Mammary epithelial cell (primary cell): ENCODE measurements at regions of chr6 and their contacts with region 1.

Region 1: DNA sequence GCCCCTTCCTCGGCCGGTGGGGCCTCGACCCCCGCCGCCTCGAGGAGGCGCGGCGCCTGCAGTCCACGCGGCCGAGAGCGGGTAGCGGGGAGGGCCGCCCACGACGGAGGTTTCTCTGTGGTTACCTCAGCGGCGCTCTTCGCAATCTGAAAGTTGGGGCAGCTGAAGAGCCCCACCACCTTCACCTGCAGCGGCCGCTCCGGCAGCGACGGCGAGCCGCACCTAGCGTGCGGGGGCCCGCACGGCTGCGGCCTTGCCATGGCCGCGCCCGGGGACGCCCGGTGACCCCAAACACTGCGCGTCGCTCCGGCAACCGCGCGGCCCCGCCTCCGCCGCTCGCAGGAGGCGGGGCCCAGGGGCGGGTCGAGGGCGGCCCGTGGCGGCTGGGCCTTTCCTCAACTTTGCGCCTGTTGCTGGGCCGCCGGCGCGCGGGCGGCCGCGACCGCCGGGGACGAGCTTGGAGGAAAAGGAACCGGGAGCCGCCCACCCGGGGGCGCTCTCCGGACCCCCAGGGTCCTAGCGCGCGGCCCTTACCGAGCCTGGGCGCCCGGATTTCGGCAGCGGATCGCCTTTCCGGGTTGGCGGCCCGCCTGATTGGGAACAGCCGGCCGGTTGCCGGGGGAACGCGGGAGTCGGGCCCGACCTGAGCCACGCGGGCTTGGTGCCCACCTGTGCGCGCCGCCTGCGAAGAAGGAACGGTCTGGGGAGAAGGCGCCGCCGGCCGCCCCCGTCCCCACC is at the starts of genes PPIL6 and SMPD2:
- DNase-seq: peak; percentile 85
- H3K4me3 ChIP-seq: peak within 1 kb of the TSS; percentile 67 to 88 (median 67)
- H3K27ac ChIP-seq: peak within 1 kb of the TSS; percentile 89
- H3K4me1 ChIP-seq: peaks cover 14% of the 10 kb centered on the region
- H3K27me3 ChIP-seq: no peaks in the 10 kb centered on the region
- CTCF ChIP-seq: peak in 1 of 2 donors; percentile 24
- total RNA-seq, gene PPIL6: 0.61 to 4.2 TPM
- total RNA-seq, gene SMPD2: 11.3 to 11.7 TPM

Region 2: DNA sequence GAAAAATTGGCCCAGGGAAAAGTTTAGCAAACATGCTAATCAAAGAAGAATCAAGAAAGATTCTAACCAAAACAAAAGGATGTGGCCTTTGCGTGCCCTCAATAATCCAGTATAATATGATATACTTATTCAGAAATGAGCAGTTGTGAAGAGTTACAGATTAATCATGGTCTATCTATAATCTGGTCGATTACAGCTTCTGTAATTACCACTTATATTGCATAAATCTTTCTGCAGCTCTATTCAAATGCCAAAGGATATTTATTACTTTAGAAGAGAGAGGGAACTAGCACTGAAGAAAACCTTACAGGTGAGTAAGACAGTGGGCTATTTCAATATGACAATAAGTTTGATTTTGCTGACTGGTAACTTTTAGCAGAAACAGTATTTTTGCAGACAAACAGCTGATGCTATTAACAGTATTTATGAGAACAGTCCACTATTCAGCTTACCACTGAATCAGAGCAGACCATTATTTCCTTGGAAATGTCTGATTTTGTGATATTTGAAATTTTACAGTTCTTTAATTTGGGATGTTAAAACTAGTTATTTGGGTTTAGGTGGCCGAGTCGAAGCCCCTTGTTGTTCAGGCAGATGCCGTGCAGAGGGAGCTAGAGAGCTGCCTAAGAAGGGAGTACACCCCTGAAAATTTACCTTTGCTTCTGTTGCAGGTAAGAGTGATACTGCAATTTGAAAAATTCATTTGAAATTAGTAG is 252.9 kb before region 1 on chr6:
- CTCF ChIA-PET with region 1: no interaction called
- dilution Hi-C with region 1: no loop called
- in situ Hi-C with region 1: no loop called
- intact Hi-C with region 1: loop called (anchors 2 kb)
- DNase-seq: peak; percentile 16
- H3K4me3 ChIP-seq: no peak overlapping the region
- H3K27ac ChIP-seq: no peak overlapping the region
- H3K4me1 ChIP-seq: no peaks in the 10 kb centered on the region
- H3K27me3 ChIP-seq: peaks cover 2% of the 10 kb centered on the region
- CTCF ChIP-seq: peak; percentile 88 to 98

Region 3: GRCh38 chr6:109336221-109336961 is 104.1 kb before region 1 on chr6:
- CTCF ChIA-PET with region 1: no interaction called
- dilution Hi-C with region 1: no loop called
- in situ Hi-C with region 1: no loop called
- intact Hi-C with region 1: no loop called
- DNase-seq: peak; percentile 31
- H3K4me3 ChIP-seq: no peak overlapping the region
- H3K27ac ChIP-seq: no peak overlapping the region
- H3K4me1 ChIP-seq: no peaks in the 10 kb centered on the region
- H3K27me3 ChIP-seq: no peaks in the 10 kb centered on the region
- CTCF ChIP-seq: no peak

Region 4: GRCh38 chr6:109362102-109362884 is 78.2 kb before region 1 on chr6:
- CTCF ChIA-PET with region 1: no interaction called
- dilution Hi-C with region 1: loop called (anchors 5 kb)
- in situ Hi-C with region 1: no loop called
- intact Hi-C with region 1: no loop called
- DNase-seq: no peak
- H3K4me3 ChIP-seq: no peak overlapping the region
- H3K27ac ChIP-seq: no peak overlapping the region
- H3K4me1 ChIP-seq: no peaks in the 10 kb centered on the region
- H3K27me3 ChIP-seq: no peaks in the 10 kb centered on the region
- CTCF ChIP-seq: no peak

Region 5: DNA sequence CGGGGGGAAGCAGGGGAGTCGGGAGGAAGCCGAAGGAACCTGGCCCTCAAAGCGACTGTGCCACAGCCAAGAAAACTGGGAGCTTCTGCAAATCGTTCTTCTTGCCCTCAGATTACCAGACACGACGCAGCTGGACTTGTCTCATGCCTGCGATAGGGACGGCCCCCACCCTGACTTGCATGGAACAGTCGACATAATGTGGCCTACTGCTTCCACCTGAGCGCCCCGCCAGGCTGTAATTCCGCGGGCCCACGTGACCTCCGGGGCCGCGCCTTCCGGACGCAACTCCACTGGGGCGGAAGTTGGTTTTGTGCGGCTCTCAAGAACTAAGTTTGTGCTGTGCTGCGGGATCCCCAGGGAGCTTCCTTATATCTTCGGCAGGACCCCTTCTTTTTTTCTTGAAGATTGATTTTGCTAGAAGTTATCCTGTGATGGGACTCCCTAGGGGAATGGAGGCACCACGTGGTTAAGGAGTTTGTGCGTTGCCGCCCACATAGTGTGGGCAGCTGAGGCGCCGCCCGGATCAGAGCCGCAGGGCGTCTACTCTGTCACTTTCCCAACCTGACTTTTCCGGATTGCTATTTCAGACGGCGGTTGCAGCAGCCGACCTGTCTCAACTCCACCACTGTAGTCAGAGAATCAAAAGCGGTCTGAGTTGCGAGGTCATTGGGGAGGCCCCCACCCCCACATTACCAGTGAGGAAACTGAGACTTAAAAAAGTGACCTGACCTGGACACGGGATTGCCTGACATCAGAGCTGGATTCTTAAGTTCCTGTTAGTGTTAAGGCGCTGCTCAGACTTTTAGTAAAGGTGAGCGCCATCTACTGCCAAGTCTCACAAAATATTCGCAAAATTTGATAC is 57.7 kb before region 1 on chr6:
- CTCF ChIA-PET with region 1: interaction called, 3 read pairs
- dilution Hi-C with region 1: loop called (anchors 5 kb)
- in situ Hi-C with region 1: no loop called
- intact Hi-C with region 1: loop called (anchors 1 kb)
- DNase-seq: peak; percentile 93
- H3K4me3 ChIP-seq: peak overlapping the region; percentile 70 to 100 (median 95)
- H3K27ac ChIP-seq: peak overlapping the region; percentile 98
- H3K4me1 ChIP-seq: peaks cover 29% of the 10 kb centered on the region
- H3K27me3 ChIP-seq: no peaks in the 10 kb centered on the region
- CTCF ChIP-seq: peak; percentile 42 to 61

Region 6: DNA sequence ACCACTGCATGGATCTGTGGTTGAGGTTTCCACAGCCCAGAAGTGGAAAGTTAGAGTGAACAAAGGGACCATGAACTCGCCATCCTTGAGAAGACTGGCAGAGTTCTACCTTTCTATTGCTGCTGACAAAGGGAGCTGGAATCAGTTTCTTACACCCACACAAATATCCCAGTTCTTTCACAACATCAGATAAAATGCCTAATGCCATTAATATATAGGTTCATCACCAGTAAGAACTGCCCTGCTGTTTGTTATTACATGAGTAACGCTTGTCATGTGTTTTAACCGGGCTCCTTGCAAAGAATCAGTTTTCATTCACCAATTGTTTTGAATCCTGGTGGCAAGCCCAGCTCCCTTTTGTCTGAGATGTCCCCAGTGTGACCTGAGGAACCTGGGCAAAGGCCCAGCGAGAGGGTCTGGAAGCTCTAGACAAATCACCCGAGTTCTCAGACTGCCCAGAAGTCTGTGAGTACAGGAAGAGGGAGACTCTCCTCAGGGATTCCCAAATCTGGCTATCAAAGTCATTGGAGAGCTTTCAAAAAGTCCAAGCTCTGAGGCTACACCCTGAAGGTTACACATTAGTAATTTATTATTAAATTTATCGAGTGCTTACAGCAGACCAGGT is 50.7 kb before region 1 on chr6:
- CTCF ChIA-PET with region 1: interaction called, 4 read pairs
- dilution Hi-C with region 1: loop called (anchors 5 kb)
- in situ Hi-C with region 1: no loop called
- intact Hi-C with region 1: no loop called
- DNase-seq: peak; percentile 62
- H3K4me3 ChIP-seq: no peak overlapping the region
- H3K27ac ChIP-seq: no peak overlapping the region
- H3K4me1 ChIP-seq: peaks cover 9% of the 10 kb centered on the region
- H3K27me3 ChIP-seq: no peaks in the 10 kb centered on the region
- CTCF ChIP-seq: no peak

Region 7: GRCh38 chr6:109454496-109455160 is 14.1 kb after region 1 on chr6:
- CTCF ChIA-PET with region 1: no interaction called
- dilution Hi-C with region 1: no loop called
- in situ Hi-C with region 1: no loop called
- intact Hi-C with region 1: loop called (anchors 1 kb)
- DNase-seq: no peak
- H3K4me3 ChIP-seq: peak overlapping the region; percentile 78 to 96 (median 90)
- H3K27ac ChIP-seq: peak overlapping the region; percentile 22
- H3K4me1 ChIP-seq: peaks cover 10% of the 10 kb centered on the region
- H3K27me3 ChIP-seq: no peaks in the 10 kb centered on the region
- CTCF ChIP-seq: no peak

Region 8: GRCh38 chr6:109482905-109483735 is 42.6 kb after region 1 on chr6 and contains the start of gene ZBTB24:
- CTCF ChIA-PET with region 1: no interaction called
- dilution Hi-C with region 1: no loop called
- in situ Hi-C with region 1: no loop called
- intact Hi-C with region 1: loop called (anchors 2 kb)
- DNase-seq: peak; percentile 87
- H3K4me3 ChIP-seq: peak within 1 kb of the TSS; percentile 67 to 82 (median 70)
- H3K27ac ChIP-seq: peak within 1 kb of the TSS; percentile 68
- H3K4me1 ChIP-seq: peaks cover 16% of the 10 kb centered on the region
- H3K27me3 ChIP-seq: no peaks in the 10 kb centered on the region
- CTCF ChIP-seq: no peak
- total RNA-seq, gene ZBTB24: 7.9 to 10.0 TPM